HEK293 (cell line): ENCODE measurements at regions of chr7 and their contacts with region 1.

Region 1: DNA sequence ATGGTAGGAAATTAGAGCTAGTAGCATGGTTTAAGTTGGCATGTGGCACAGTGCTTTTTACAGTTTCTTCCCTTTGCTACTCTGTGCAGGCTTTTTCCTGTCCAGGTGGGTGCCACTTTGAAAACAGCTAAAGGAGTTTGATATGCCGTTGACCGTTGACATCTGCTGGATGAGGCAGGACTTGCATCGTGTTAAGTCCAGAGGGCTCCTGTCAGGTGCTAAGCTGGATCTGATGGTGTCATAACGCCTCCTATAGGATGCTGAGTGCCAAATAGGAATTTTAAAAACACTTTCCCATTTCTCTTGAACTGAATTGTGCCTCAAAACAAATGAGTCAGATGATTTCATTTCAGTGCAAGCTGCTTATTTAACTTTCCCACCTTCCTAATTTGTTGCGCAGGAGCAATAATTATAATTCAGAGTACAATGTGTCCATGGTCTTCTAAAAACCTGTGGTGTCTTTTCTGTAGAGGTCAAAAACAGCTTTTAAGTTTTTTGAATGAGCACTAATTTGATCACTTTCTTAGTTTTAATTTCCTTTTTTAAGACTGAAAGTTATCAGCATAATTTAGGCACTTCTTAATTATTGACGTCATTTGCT is 178.3 kb downstream of the CDCA7L start:
- H3K4me3 ChIP-seq: no peak overlapping the region
- H3K27ac ChIP-seq: no peak overlapping the region
- H3K4me1 ChIP-seq: no peaks in the 10 kb centered on the region
- CTCF ChIP-seq: peak; percentile 66

Region 2: DNA sequence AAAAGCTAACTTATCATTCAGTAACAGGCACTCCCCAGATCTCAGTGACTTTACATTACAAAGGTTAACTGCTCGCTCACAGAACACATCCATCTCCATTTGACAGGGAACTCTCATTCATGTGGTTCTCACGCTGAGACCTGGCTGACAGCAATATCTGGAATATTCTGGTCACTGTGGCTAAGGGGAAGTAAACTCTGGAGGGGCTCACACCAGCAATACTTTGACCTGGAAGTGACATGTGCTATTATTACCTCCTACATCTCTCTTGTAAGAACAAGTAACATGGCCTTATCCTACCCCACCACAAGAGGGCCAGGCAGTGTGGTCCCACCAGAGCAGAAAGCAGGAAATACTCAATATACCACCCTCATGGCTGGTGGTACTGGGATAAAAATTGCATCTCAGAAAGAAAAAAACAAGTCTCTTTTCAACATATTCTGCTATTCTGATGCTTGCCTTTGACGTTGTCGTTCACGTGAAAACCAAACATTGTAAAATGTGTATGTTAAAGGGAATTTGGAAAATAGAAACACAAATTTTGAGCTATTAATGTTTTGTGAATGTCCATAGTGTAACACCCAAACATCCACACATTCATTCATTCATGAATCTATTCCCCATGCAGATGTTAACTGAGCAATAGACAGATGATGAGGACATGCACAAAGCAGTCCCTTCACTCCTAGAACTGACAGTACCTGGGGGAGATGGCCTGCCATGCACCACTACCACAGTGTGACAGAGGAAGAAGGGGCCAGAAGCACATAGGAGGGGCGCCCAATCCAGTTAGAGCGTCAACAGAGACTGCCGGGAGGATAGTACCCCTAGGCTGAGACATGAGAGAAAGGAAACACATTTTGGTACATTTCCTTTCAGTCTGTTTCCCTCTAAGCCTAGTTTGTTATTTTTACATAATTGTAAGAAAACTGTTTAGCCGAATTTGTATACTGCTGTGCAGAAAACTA is 505.5 kb before region 1 on chr7:
- CTCF ChIA-PET with region 1: interaction called, 110 read pairs
- POLR2A ChIA-PET with region 1: no interaction called
- H3K4me3 ChIP-seq: no peak overlapping the region
- H3K27ac ChIP-seq: no peak overlapping the region
- H3K4me1 ChIP-seq: 0 out of 2 replicates have a peak, but pooled peaks cover 3% of the 10 kb centered on the region
- CTCF ChIP-seq: peak; percentile 45; the same call in 1 of the 2 replicates

Region 3: DNA sequence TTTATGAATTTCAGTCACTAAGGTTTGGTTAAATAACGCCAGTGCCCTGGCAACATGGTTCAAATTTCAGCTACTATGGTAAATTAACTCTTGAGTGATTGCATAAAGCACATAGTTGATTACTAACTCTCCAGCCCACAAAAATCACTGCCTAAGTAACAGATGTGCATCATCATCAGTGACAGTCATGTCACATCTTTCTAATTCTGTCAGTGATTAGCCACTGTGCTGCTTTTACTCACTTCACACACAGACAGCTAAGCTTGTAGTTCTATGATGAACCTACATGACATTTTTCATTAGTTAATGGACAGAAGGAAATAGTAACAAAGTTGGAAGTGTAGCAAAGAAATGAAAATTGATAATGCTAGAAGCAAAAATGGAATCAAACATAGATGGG is 115.7 kb before region 1 on chr7:
- CTCF ChIA-PET with region 1: no interaction called
- POLR2A ChIA-PET with region 1: no interaction called
- H3K4me3 ChIP-seq: no peak overlapping the region
- H3K27ac ChIP-seq: no peak overlapping the region
- H3K4me1 ChIP-seq: no peaks in the 10 kb centered on the region
- CTCF ChIP-seq: no peak

Region 4: DNA sequence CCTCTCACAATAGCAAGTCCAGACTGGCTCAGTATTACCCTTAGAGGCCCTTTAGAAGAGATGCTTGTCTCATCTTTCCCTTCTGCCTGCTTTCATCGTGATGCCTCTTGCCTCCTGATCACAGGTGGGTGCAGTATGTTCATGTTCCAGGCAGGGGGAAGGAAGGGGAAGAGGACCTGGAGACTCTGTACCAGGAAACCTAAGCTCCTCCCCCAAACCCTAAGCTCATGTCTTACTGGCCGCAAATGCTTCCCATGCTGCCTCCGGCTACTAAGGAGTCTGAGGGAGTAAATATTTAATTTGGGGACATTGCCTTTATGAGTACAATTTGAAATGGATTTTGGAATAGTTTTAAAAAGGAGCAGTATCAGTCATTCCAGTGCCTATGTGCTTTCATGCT is 14.3 kb before region 1 on chr7:
- CTCF ChIA-PET with region 1: interaction called, 11 read pairs
- POLR2A ChIA-PET with region 1: no interaction called
- H3K4me3 ChIP-seq: no peak overlapping the region
- H3K27ac ChIP-seq: no peak overlapping the region
- H3K4me1 ChIP-seq: no peaks in the 10 kb centered on the region
- CTCF ChIP-seq: no peak

Region 5: DNA sequence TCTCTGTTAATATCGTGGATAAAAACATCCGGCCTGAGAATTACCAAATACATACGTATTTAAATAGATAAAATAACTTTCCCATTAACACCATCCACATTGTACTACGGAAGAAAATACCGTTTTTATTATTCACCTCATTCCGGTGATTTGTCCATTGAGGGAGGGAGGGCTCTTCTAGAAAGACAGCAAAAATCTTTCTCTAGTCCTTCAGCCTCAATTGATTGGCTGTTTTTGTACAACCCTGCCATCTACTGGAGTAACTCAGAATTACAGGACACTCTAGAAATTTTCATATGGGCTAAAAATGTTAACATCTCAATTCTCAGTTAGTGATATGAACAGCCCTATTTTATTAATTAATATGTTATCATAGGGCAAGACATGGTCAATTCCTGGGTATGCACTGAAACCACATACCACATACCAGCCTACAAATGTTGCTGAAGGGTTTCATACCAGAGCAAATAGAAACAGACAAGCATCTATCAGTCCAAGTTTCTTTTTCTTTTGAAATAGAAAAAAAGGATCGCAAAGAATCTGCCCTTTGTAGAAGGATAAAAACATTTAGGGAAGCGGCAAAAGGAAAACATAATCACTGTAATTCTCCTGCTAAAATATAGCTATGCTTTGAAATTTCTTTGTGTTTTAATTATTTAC is 234.1 kb after region 1 on chr7:
- CTCF ChIA-PET with region 1: interaction called, 25 read pairs
- POLR2A ChIA-PET with region 1: no interaction called
- H3K4me3 ChIP-seq: no peak overlapping the region
- H3K27ac ChIP-seq: no peak overlapping the region
- H3K4me1 ChIP-seq: no peaks in the 10 kb centered on the region
- CTCF ChIP-seq: no peak